Motor neuron (in vitro differentiated cells): ENCODE measurements at regions of chr5 and their contacts with region 1.

Region 1: DNA sequence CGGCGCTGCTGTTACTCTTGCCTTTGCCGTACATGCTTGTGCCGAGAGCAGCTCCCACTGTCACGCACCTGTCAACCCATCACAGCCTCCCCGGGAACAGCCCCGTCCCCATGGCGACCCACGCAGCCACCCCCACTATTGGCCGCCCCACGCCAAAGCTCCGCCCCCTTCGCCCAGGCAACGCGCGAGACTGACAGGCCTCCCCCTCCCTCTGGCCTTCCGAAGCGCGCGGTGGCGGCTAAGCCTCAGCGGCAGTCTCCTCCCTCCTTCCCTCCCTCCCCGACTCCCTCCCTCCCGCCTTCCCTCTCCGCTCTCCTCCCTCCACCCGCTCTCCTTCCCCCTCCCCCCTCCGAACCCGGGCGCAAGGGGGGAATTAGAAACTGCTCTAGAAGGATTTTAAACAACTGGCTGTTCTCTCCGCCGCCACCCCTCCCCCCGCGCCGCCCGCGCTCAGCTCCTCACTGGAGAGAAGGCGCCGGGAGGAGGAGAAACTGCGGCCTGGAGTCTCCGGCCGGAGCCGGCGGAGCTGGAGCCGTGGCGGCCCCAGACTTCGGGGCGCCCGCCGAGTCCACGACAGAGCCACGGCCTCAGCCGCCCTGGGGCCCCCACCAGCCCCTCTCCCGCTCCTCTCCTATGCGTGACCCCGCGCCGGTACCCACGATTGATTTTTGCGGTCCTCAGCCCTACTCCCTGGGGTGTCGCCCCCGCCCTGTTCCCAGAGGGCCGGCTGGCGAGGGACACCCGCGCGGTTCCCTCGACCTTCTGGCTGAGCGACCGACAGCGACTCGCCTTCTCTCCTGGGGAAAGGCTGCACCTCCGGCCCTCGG is at the start of gene SSBP2:
- ATAC-seq: peak; percentile 76 to 92 (median 88)
- H3K4me3 ChIP-seq: peak within 1 kb of the TSS; percentile 55 to 92 (median 68)
- H3K27ac ChIP-seq: peak within 1 kb of the TSS; percentile 79 to 89
- H3K4me1 ChIP-seq: peaks cover 19 to 39% of the 10 kb centered on the region in 2 donors
- total RNA-seq, gene SSBP2: 18.3 to 129 (median 61.7) TPM

Region 2: DNA sequence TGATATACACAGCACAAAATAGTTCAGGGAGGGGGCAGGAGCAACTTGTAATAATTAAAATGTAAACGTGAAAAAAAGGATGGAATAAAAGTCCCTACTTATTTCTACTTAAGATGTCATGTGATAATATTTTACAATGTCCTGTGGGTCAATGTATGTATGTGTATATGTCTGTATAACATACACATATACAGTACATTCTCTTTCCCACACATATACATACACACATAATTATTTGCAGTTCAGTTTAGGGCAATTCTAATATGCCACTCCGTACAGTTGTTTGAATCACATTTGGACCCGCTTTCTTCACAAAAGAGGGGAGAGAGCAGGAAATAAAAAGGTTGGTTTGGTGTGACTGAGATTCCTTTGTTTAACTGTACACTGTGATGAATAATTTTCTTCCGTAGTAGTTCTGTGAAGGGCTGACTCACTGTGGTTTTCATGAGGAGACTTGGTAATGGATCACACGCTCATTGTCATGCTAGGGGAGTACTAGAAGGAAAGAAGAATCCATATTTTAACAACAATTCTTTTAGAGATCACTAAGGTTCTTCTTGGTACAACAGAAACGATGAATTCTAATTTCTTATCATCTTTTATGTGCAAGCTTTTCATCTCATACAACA is 331.1 kb before region 1 on chr5:
- in situ Hi-C with region 1: loop called in 1 of 9 experiments (anchors 25 kb)
- ATAC-seq: peak; percentile 82 to 99 (median 99)
- H3K4me3 ChIP-seq: no peak overlapping the region
- H3K27ac ChIP-seq: peak overlapping the region; percentile 47 to 56
- H3K4me1 ChIP-seq: peaks cover 28 to 33% of the 10 kb centered on the region in 2 donors

Region 3: DNA sequence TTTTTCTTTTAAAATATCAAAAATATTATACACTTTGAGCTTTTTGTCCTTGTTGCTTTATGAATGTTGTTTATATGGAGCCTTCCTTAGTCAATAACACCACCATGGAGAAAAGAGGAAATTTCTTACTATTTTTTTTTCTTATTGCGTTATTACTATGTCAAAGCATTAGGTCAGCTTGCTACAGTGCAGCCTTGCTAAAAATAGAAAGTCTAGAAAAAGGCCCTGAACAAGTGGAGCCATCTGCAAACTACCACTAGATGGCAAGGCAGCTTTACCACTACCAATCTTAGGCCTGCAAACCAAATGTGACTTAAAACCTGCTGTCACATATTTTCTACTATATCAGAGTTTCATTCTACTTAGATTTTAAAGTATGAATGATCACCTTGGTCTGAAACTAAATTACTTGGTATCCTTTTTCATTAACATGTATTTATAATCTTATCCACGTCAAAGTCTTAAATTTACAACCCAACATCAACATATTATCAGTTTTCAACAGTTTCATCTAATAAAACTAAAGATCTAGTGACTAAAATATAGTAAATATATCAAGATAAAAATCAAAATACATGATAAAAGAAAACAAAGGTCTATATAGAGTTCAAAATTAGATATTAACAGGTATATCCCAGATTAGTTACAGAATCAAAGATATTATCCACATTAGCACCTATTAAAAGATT is 244.2 kb before region 1 on chr5:
- in situ Hi-C with region 1: loop called in 3 of 9 experiments (anchors 10 to 25 kb)
- ATAC-seq: peak; percentile 100
- H3K4me3 ChIP-seq: no peak overlapping the region
- H3K27ac ChIP-seq: no peak overlapping the region
- H3K4me1 ChIP-seq: peaks cover 2 to 5% of the 10 kb centered on the region in 2 donors

Region 4: DNA sequence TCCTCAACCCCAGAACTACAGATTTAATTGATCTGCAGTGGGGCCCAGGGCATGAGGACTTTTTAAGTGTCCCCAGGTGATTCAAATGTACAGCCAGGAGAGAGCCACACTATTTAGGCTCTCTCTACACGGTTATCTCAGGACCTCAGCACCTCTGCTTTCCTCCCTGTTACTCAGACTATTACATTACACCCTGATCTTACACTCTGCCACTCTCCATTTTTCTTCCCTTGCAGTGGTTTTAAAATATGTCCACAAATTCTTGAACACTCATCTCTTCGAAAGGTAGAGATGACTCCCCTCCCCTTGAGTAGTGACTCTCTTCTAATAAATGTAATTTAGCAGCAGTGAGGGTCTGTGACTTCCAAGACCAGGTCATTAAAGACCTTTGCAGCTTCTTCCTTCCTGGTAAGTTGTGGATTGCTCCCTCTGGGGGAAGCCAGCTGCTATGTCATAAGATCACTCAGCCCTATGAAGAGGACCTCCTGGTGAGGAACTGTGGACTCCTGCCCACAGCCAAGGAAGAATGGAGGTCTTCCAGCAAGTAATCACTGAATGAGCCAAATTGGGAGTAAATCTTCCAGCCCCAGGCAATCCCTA is 87.2 kb after region 1 on chr5:
- in situ Hi-C with region 1: loop called in 2 of 9 experiments (anchors 10 kb)
- ATAC-seq: peak in 4 of 8 experiments; percentile 42 to 79 (median 68)
- H3K4me3 ChIP-seq: no peak overlapping the region
- H3K27ac ChIP-seq: no peak overlapping the region
- H3K4me1 ChIP-seq: peaks cover 10 to 33% of the 10 kb centered on the region in 2 donors

Region 5: DNA sequence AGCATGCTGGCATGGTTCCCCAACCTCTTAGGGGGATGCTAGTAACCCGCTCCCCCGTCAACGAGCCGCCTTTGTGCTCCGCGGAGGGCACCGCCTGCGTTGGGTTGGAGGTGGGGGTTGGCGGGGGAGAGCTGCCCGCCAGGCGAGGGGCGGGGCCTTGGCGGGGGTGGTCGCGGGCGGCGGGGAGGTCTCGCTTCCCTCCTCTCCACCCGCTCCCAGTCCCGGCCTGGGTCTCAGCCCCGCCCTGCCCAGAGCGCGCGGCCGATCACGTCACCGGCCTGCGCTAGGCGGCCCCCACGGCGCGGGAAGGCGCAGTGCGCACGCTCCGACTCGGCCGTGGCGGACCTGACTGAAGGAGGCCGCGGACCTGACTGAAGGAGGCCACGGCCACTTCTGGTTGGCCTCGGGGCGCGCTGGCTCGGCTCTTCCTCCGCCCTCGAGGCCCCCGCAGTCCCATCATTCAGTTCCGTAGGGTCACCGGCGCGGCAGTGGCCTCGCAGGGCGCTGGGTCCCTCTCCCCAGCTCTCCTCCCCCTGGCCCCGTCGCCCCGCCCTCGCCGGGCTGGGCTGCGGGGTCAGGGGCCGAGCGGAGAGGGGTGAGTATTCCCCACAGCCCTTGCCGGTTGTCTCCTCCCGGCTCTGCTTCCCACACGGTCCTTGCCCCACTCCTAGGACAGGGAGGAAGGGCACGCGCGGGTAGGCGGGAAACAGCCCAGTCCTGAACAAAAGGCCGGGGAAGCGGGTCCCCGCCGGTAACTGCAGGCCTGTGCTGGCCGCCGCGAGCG is 220.7 kb after region 1 on chr5 and contains the start of gene ATG10:
- in situ Hi-C with region 1: loop called in 1 of 9 experiments (anchors 25 kb)
- ATAC-seq: peak; percentile 92 to 98 (median 95)
- H3K4me3 ChIP-seq: peak within 1 kb of the TSS; percentile 38 to 74 (median 45)
- H3K27ac ChIP-seq: peak within 1 kb of the TSS; percentile 94
- H3K4me1 ChIP-seq: peaks cover 4 to 8% of the 10 kb centered on the region in 2 donors
- total RNA-seq, gene ATG10: 4.5 to 15.9 (median 7.8) TPM